ENCODE measurements at regions of chr3 and their contacts with region 1.

Region 1: DNA sequence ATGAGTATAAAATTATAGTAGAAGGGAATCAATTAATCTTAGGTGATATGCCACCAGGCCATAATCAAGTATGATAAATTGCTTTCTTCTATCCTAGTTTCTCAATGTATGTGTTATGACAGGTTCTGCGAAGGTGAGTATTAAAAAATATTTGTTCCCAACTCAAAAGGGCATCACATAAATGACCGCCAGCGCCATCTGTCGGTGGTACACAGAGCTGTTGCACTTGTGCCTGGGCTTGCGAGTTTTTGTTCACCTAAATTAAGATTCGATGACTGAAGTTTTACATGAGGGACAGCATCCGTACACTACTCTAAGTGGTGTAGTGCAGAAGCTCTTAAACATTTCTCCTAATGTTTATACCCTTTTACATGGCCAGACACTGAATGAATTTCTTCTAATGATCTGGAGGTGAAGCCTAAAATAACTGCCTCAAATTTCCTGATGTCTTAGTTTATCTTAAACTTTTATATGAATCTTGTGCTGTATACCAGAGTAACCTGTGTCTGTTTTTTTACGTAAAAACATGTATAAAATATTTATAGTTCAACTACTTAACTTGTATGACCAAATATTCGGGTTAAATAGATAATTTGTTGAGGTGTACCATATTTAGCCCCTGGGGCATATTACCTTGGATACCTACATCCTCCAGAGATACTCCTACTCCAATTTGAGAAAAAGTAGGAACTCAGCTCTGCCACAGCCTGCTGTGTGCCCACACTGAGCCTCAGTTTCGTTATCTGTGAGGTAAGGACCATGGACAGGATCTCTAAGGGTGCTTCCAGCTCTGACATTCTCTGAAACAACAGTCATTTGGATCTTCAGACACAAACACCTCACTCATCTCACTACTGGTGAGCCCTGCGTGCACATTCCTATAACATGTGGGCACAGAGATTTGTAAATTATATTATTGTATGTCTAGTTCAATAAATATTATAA is 365.6 kb downstream of the MAGI1 start:
- DNase-seq: peak; percentile 9 to 56
- ATAC-seq: peak in 1 of 2 experiments; percentile 73; a peak in 2 of 6 replicates
- H3K4me3 ChIP-seq: no peak overlapping the region
- H3K27ac ChIP-seq: no peak overlapping the region
- H3K4me1 ChIP-seq: no peaks in the 10 kb centered on the region; the same call in 2 of the 3 replicates
- CTCF ChIP-seq: peak; percentile 62
- EP300 ChIP-seq: no peak
- POLR2A ChIP-seq: no peak
- RAD21 ChIP-seq: peak; percentile 50 to 54; a peak in 4 of 5 replicates

Region 2: DNA sequence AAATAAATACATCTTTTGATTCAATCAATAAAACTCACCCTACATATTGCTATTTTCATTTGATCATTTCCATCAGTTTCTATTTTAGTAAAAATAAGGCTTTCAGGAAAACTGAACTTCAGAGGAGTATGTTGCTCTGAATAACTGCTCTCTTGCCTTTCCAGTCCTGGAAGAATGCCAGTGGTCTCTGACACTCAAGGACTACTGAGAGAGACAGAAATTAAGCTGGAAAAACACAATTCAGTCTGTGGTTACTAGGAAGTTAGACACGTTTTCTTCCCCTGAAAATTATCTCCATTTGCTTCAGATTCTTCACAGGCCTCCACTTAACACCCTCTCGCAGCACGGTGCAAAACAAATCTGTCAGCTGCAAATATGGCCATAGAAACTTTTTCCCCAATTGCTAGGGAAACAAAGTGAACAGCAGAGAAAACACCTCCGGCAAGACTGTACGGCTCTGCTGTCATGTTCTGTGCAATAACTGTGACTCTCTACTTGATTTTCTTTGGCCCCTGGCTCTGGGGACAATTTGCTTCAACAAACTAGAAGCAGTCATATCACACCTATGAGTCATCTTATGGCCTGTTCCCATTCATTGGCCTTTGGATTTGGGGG is 12.6 kb after region 1 on chr3:
- CTCF ChIA-PET with region 1: interaction called, 12 read pairs
- POLR2A ChIA-PET with region 1: no interaction called
- DNase-seq: no peak
- ATAC-seq: no peak
- H3K4me3 ChIP-seq: no peak overlapping the region
- H3K27ac ChIP-seq: no peak overlapping the region
- H3K4me1 ChIP-seq: no peaks in the 10 kb centered on the region
- CTCF ChIP-seq: no peak
- EP300 ChIP-seq: no peak
- POLR2A ChIP-seq: no peak
- RAD21 ChIP-seq: no peak

Measured in A549 (cell line).